ENCODE measurements at regions of chr15 and their contacts with region 1.

Region 1: DNA sequence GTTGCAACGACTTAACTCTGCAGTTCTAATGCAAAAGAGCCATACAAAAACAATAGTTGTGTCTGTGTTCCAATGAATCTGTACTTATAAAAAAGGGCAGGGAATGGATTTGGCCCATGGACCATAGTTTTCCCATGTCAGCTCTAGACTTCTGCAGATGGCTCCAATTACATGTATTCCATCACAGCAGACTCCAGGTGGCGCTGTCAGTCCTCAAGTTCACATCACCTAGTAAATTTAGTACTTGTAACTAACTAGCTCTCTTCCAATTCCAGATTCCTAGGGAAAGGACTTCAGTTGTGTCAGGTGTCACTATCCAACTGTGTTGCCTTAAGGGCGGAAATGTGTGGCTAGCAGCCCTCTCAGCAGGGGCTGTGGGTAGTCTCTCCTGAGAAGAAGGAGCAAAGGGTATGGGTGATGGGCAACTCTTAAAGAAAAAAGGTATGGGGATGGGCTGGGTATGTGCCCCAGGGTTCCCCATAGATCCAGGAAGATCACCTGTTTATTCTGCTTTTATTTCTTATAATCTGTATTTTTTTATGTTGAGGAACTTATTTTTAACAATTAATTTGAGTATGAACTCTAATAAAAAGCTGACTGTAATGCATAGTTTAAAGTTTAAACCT is 36.2 kb downstream of the BBS4 start:
- DNase-seq: peak; percentile 33 to 72 (median 50)
- H3K4me3 ChIP-seq: no peak overlapping the region
- H3K4me3 Mint-ChIP-seq: no peak overlapping the region
- H3K27ac ChIP-seq: no peak overlapping the region
- H3K27ac Mint-ChIP-seq: no peak overlapping the region
- H3K4me1 ChIP-seq: no peaks in the 10 kb centered on the region
- H3K4me1 Mint-ChIP-seq: peaks cover 0 to 3% (median 0%) of the 10 kb centered on the region in 3 donors
- H3K27me3 ChIP-seq: no peaks in the 10 kb centered on the region
- H3K27me3 Mint-ChIP-seq: no peaks in the 10 kb centered on the region

Region 2: DNA sequence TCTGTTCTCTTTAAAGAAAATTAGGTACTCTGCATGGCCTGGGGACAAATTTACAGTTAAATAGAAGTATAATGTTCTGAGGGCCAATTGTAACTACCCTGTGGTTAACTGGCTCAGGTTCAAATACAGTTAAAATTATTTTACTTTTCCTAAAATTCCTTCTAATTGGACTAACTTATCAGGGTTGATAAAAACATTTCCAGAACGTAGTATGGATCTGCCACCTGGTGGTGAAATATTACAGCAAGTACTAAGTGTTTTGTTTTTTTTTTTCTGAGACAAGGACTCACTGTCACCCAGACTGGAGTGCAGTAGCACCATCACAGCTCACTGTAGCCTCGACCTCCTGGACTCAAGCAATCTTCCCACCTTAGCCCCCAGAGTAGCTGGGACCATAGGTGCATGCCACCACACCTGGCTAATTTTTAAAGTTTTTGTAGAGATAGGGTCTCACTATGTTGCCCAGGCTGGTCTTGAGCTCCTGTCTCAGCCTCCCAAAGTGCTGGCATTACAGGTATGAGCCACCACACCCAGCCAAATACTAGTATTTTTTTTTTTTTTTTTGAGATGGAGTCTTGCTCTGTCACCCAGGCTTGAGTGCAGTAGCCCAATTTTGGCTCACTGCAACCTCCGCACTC is 359.3 kb after region 1 on chr15:
- CTCF ChIA-PET with region 1: interaction called, 14 read pairs
- POLR2A ChIA-PET with region 1: no interaction called
- DNase-seq: peak in 2 of 5 donors; percentile 30 to 34
- H3K4me3 ChIP-seq: no peak overlapping the region
- H3K4me3 Mint-ChIP-seq: no peak overlapping the region
- H3K27ac ChIP-seq: no peak overlapping the region
- H3K27ac Mint-ChIP-seq: peak overlapping the region in 1 of 8 donors; percentile 6
- H3K4me1 ChIP-seq: no peaks in the 10 kb centered on the region
- H3K4me1 Mint-ChIP-seq: no peaks in the 10 kb centered on the region
- H3K27me3 ChIP-seq: no peaks in the 10 kb centered on the region
- H3K27me3 Mint-ChIP-seq: no peaks in the 10 kb centered on the region